Sciatic nerve (tissue), 2 donors: ENCODE measurements at regions of chr3 and their contacts with region 1.

Region 1: DNA sequence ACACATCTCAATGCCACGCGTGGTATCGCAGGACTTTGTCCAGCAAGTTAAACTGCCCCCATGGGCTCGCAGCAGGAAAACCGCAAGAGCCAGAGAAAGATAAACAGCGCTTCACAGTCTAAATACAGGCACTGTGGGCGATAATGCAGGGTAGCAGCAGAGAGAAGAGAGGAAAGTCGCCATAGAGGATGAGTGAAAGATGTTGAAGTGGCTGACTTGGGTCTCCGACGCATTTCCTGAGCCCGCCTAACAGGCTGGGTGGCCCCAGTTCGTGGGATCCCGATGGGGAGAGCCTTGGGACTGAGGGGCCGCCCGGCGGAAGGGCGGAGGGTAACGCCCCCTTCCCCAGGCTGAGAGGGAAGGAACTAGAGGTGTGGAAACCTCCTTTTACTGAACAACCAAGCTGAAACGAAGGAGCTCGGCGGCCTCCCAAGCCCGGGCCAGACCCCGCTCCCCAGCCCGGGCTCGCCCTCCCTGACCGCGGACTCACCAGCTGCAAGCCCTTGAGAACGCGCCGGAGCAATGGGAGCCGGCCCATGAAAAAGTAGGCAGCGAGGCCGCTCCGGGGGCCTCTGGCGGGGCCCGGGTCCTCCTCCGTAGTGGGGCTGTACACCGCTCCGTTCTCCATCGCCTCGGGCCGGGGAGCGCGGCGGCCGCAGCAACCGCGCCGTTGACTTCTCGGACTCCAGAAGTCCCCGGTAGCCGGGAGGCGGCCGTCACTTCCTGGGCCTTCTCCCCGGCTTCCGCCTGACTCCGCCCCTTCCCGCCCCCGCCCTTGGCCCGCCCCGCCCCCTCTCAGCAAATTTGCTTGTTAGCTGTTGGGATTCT is at the start of gene CMTM6:
- DNase-seq: peak; percentile 89
- ATAC-seq: peak; percentile 97
- total RNA-seq, gene CMTM6: 51.2 TPM

Region 2: DNA sequence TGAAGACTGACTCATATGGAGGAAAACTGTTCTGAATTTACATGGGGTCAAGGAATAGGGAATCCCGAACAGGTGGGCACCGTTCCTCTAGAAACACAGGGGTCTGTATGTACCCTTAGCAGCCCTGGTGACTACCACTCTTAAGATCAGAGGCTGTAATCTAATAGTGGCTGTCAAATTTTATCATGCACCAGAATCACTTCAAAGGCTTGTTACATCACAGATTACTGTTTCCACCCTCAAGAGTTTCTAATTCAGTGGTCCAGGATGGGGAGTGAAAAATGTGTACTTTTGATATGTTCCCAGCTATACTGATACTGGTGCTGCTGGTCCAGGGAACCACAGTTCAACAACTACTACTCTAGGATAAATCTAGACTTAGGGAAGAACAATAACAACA is 40.5 kb after region 1 on chr3:
- intact Hi-C with region 1: no loop called
- DNase-seq: no peak
- ATAC-seq: no peak

Region 3: DNA sequence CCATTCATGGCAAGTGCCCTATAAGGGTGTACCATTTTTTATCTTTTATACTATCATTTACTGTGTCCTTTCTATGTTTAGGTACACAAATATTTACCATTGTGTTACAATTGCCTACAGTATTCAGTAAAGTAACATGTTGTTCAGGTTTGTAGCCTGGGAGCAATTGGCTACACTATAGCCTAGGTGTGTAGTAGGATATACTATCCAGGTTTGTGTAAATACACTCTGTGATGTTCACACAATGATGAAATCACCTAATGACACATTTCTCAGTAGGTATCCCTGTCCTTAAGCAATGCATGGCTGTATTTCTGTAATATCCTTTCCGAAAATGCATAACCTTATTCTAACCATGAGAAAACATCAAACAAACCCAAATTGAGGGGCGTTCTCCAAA is 164.8 kb after region 1 on chr3:
- intact Hi-C with region 1: loop called (anchors 10 kb)
- DNase-seq: no peak
- ATAC-seq: no peak